GM12878 (cell line): ENCODE measurements at regions of chr10 and their contacts with region 1.

Region 1: GRCh38 chr10:74913377-74913979 is 87.1 kb downstream of the KAT6B start:
- DNase-seq: no peak
- ATAC-seq: peak; percentile 89
- H3K4me3 ChIP-seq: peak overlapping the region; percentile 15; the same call in 1 of the 2 replicates
- H3K27ac ChIP-seq: peak overlapping the region; percentile 62
- H3K4me1 ChIP-seq: peaks cover 5% of the 10 kb centered on the region
- H3K27me3 ChIP-seq: no peaks in the 10 kb centered on the region
- CTCF ChIP-seq: no peak
- EP300 ChIP-seq: no peak
- POLR2A ChIP-seq: no peak
- RAD21 ChIP-seq: 0 out of 2 replicates have a peak, but pooled peaks have one; percentile 1

Region 2: GRCh38 chr10:74808501-74808900 is 105.0 kb before region 1 on chr10:
- CTCF ChIA-PET with region 1: no interaction called
- POLR2A ChIA-PET with region 1: no interaction called
- RAD21 ChIA-PET with region 1: no interaction called
- SMC1A ChIA-PET with region 1: no interaction called
- in situ Hi-C with region 1: no loop called
- intact Hi-C with region 1: no loop called
- DNase-seq: no peak
- ATAC-seq: no peak
- H3K4me3 ChIP-seq: no peak overlapping the region
- H3K27ac ChIP-seq: no peak overlapping the region
- H3K4me1 ChIP-seq: no peaks in the 10 kb centered on the region
- H3K27me3 ChIP-seq: no peaks in the 10 kb centered on the region
- CTCF ChIP-seq: no peak
- EP300 ChIP-seq: no peak
- POLR2A ChIP-seq: no peak
- RAD21 ChIP-seq: no peak

Region 3: GRCh38 chr10:74841265-74841973 is 72.1 kb before region 1 on chr10:
- CTCF ChIA-PET with region 1: no interaction called
- POLR2A ChIA-PET with region 1: no interaction called
- RAD21 ChIA-PET with region 1: no interaction called
- SMC1A ChIA-PET with region 1: no interaction called
- in situ Hi-C with region 1: no loop called
- intact Hi-C with region 1: no loop called
- DNase-seq: no peak
- ATAC-seq: peak; percentile 19; the same call in 1 of the 3 replicates
- H3K4me3 ChIP-seq: no peak overlapping the region
- H3K27ac ChIP-seq: no peak overlapping the region
- H3K4me1 ChIP-seq: no peaks in the 10 kb centered on the region
- H3K27me3 ChIP-seq: no peaks in the 10 kb centered on the region
- CTCF ChIP-seq: no peak
- EP300 ChIP-seq: no peak
- POLR2A ChIP-seq: no peak
- RAD21 ChIP-seq: no peak

Region 4: DNA sequence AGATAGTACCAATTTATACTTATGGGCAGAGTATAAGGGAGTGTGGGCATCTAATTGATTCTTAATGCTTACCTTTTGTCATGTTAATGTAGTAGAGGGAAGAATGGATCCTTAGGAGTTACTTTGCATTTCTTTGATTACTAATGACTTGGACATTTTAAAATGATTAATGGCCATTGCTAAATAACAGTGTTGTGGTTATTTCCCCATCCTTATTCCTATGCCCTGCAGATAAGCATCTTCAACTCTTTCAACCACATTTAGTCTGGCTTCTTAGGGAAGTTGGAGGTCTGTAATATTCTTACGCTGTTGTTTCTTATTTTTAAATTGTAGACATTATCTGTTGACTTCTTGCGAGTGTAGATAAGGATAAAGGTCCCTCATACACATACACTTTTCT is 49.9 kb before region 1 on chr10:
- CTCF ChIA-PET with region 1: interaction called, 4 read pairs
- POLR2A ChIA-PET with region 1: interaction called, 3 read pairs
- RAD21 ChIA-PET with region 1: interaction called, 10 read pairs
- SMC1A ChIA-PET with region 1: interaction called, 3 read pairs
- in situ Hi-C with region 1: no loop called
- intact Hi-C with region 1: no loop called
- DNase-seq: no peak
- ATAC-seq: no peak
- H3K4me3 ChIP-seq: no peak overlapping the region
- H3K27ac ChIP-seq: no peak overlapping the region
- H3K4me1 ChIP-seq: 0 out of 2 replicates have a peak, but pooled peaks cover 2% of the 10 kb centered on the region
- H3K27me3 ChIP-seq: no peaks in the 10 kb centered on the region
- CTCF ChIP-seq: no peak
- EP300 ChIP-seq: no peak
- POLR2A ChIP-seq: no peak
- RAD21 ChIP-seq: no peak

Region 5: DNA sequence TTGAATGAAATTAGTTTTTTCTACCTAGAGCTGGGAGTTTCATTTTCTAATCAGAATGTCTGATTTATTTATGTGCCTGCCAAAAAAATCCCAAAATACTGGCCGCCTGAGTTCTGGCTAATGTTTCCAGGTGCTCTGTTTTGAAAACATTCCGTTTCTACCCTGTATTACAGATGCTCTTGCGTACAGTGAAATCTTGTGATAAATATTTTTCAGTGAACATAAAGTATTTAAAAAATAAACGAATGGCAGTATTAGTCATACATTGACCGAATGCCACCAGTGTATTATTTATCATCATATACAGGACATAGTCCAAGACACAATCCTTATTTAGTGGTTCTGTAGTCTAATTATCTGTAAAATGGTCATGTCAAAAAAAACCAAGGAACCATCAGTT is 15.7 kb after region 1 on chr10:
- CTCF ChIA-PET with region 1: interaction called, 6 read pairs
- POLR2A ChIA-PET with region 1: interaction called, 6 read pairs
- RAD21 ChIA-PET with region 1: interaction called, 5 read pairs
- SMC1A ChIA-PET with region 1: interaction called, 10 read pairs
- in situ Hi-C with region 1: no loop called
- intact Hi-C with region 1: no loop called
- DNase-seq: no peak
- ATAC-seq: no peak
- H3K4me3 ChIP-seq: no peak overlapping the region
- H3K27ac ChIP-seq: no peak overlapping the region
- H3K4me1 ChIP-seq: no peaks in the 10 kb centered on the region
- H3K27me3 ChIP-seq: no peaks in the 10 kb centered on the region
- CTCF ChIP-seq: no peak
- EP300 ChIP-seq: no peak
- POLR2A ChIP-seq: no peak
- RAD21 ChIP-seq: no peak